Left cardiac atrium (tissue), 4 donors: ENCODE measurements at regions of chr3 and their contacts with region 1.

Region 1: DNA sequence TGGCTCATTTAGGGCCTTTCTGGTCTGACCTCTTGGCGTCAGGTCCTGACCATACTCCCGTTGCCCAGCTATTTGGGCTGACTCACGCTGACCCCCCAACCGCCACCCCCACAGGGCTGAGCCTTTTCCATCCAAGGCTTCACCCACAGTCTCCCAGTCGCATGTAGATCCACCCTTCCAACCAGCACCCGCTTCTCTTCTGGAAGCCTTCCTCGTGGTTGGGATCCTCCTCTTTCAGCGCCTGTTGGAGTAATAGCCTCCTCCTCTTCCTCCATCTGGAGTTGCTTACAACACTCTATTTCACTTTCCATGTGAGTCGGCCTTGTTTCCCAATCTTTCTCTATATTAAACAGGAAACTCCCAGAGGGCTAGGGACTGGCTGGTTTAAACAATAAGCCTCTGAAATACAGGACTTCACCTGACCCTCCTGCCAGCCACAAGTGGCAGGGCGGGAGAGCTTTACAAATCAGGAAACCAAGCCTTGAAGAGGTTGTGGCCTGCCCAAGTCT is 2.1 kb upstream of the ALAS1 start:
- DNase-seq: peak; percentile 60
- ATAC-seq: peak; percentile 24 to 25

Region 2: GRCh38 chr3:52154117-52155094 is 41.5 kb before region 1 on chr3 and contains the start of gene POC1A:
- intact Hi-C with region 1: loop called in 1 of 2 experiments (anchors 2 kb)
- DNase-seq: peak; percentile 98
- ATAC-seq: peak; percentile 98 to 99
- total RNA-seq, gene POC1A: 1.9 to 2.4 TPM